Right ventricle myocardium inferior (tissue), 1 donor: ENCODE measurements at regions of chr1 and their contacts with region 1.

Region 1: GRCh38 chr1:162561037-162561616 is 395 bp upstream of the UAP1 start:
- DNase-seq: peak; percentile 99
- ATAC-seq: peak; percentile 97

Region 2: DNA sequence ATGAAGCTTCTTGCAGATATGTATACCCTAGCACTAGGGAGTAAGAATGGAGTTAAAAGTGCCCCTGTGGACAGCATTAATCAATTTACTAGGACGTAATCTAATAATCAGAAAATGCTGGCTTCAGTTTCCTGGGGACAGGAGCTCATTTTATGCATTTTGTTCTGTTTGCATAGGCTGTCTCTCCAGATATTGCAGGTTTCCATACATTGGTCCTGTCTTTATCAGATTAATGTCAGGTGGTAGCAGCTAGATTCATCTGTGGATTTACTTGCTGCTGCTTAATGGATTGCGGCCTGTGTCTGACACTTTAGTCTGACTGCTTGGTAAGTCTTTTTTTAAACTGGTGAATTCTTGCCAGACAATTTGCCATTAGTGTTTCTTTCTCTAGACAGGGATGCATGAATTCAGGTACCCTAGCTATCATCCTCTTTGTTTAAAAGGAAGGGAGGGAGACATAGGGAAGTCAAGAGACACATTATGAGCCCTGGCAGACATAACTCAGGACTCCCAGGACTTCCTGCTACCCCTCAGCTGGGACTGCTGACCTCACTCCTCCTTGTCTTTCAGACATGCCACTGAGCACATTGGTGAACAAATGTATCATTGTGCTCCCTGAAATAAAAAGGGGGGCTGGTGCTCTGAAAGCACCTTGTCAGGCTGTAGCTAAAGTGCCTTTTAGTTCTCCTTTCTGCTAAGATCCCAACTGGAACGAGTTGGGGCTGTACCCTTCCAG is 443.9 kb before region 1 on chr1:
- intact Hi-C with region 1: no loop called
- DNase-seq: no peak
- ATAC-seq: no peak

Region 3: DNA sequence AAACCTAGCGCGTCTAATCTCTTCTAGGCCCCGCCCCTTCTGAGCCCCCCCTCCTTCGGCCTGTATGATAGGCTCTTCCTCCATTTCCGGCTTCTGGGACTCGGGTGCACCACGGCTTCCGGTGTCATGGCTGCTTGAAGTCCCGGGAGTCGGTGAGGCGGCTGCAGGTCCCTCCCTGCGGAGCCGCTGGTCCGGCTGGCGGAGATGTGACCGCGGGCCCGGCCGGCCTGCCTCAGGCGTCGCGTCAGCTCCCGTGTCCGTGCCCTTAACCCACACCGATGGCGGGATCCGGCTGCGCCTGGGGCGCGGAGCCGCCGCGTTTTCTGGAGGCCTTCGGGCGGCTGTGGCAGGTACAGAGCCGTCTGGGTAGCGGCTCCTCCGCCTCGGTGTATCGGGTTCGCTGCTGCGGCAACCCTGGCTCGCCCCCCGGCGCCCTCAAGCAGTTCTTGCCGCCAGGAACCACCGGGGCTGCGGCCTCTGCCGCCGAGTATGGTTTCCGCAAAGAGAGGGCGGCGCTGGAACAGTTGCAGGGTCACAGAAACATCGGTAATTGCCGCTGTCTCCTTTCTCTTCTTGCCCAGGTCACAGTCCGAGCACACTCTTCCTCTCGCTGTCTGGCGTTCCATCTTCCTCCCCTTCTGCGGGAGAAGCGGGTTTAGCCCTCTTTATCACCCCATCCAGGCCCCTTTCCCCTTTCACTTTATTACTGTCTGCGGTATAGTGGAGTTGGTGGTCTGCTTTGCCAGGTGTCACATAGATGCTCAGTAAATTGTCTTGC is 63.2 kb before region 1 on chr1 and contains the start of gene UHMK1:
- intact Hi-C with region 1: loop called (anchors 2 kb)
- DNase-seq: peak; percentile 95
- ATAC-seq: peak; percentile 99
- total RNA-seq, gene UHMK1: 21.6 TPM

Region 4: GRCh38 chr1:162639718-162640117 is 78.6 kb after region 1 on chr1:
- intact Hi-C with region 1: no loop called
- DNase-seq: no peak
- ATAC-seq: no peak